Caco-2 (cell line): ENCODE measurements at regions of chr11 and their contacts with region 1.

Region 1: DNA sequence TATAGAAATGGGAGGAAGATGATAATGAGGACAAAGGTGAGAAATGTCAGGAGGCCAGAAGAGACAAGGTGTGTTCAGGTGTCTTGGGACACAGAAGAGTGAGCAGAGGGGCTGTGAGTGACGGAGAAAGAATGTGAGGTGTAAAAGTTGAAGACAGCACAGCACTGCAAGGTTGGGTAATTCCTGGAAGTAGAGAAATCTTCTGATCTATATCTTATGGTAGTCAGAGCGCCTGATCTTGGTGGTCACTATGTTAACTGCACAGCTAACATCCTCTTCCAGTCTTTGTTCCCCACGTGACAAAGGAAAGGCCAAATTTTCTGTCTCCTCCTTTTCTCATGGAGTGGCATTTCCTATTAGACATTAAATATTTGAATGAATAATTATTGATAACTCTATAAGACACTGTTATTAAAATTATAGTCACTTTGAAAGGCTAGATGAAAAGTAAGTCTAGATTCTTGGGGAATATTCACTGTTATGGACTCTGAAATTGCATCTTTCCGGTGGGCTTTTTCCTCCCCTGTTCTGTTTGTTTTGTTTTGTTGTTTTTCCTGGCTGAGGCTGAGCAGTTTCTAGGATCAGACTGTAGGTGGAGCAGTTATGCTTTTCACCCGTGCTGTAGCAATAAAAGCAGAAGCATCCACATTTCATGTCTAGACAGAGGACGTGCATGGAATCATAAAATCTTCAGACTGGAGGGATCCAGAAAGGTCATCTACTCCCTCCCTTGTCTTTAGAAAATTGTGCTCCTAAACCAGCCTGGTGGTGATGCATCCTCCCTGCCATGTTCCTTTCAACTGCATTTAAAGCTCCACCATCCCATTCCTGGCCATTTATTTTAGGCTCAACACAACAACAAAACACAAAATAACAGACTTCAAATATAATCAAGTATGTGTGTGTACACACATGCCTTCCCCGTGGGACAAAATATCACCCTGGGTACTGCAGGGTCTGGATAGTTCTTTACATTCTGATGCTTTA is 26.6 kb downstream of the SC5D start:
- DNase-seq: peak in 1 of 2 experiments; percentile 61
- H3K4me3 ChIP-seq: no peak overlapping the region
- H3K4me3 Mint-ChIP-seq: no peak overlapping the region
- H3K27ac Mint-ChIP-seq: no peak overlapping the region
- H3K4me1 ChIP-seq: peaks cover 4% of the 10 kb centered on the region; the same call in 1 of the 2 replicates
- H3K4me1 Mint-ChIP-seq: peaks cover 18% of the 10 kb centered on the region
- H3K27me3 ChIP-seq: no peaks in the 10 kb centered on the region
- H3K27me3 Mint-ChIP-seq: peaks cover 12% of the 10 kb centered on the region
- CTCF ChIP-seq: peak; percentile 88 to 95

Region 2: DNA sequence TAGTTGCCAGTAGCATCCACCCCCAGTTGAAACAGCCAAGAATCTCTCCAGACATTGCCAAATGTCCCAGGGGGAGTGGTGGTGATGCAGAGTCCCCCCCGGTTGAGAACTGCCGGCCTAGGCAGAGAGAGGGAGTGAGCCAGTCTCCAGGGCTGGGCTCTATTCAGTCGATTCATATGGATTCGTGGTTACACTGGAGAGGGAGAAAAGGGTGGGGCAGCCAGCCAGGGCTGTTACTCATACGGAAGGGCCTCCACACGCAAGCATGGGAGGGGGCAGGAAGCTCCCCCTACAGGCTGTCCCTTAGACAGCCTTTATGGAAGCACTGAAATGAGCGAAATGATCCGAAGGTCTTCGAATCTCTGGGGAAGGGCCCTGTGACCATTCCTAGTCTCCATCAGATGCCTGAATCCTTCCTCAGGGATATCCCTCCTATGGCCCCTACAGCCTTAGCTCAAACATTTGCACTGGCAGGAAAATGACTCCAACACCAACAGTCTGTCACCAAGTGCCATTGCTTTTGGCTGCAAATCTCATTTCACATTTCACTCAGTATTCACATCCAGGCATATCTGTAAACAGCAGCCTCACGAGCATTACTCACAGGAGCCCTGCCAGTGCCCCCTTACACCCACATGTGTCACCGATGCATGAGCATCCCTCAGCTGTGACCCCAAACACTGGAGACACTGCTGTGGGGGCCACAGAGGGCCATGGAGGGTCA is 1012.5 kb before region 1 on chr11:
- CTCF ChIA-PET with region 1: no interaction called
- POLR2A ChIA-PET with region 1: no interaction called
- intact Hi-C with region 1: no loop called
- DNase-seq: no peak
- H3K4me3 ChIP-seq: no peak overlapping the region
- H3K4me3 Mint-ChIP-seq: no peak overlapping the region
- H3K27ac Mint-ChIP-seq: no peak overlapping the region
- H3K4me1 ChIP-seq: no peaks in the 10 kb centered on the region
- H3K4me1 Mint-ChIP-seq: peaks cover 8% of the 10 kb centered on the region
- H3K27me3 ChIP-seq: no peaks in the 10 kb centered on the region
- H3K27me3 Mint-ChIP-seq: no peaks in the 10 kb centered on the region
- CTCF ChIP-seq: peak in 1 of 2 experiments; percentile 33

Region 3: GRCh38 chr11:121383716-121384115 is 64.6 kb after region 1 on chr11:
- CTCF ChIA-PET with region 1: no interaction called
- POLR2A ChIA-PET with region 1: no interaction called
- intact Hi-C with region 1: loop called (anchors 1 kb)
- DNase-seq: no peak
- H3K4me3 ChIP-seq: no peak overlapping the region
- H3K4me3 Mint-ChIP-seq: no peak overlapping the region
- H3K27ac Mint-ChIP-seq: no peak overlapping the region
- H3K4me1 ChIP-seq: no peaks in the 10 kb centered on the region
- H3K4me1 Mint-ChIP-seq: no peaks in the 10 kb centered on the region
- H3K27me3 ChIP-seq: no peaks in the 10 kb centered on the region; the same call in 1 of the 2 replicates
- H3K27me3 Mint-ChIP-seq: peaks cover 14% of the 10 kb centered on the region
- CTCF ChIP-seq: no peak

Region 4: GRCh38 chr11:121394785-121395184 is 75.6 kb after region 1 on chr11:
- CTCF ChIA-PET with region 1: no interaction called
- POLR2A ChIA-PET with region 1: no interaction called
- intact Hi-C with region 1: no loop called
- DNase-seq: no peak
- H3K4me3 ChIP-seq: no peak overlapping the region
- H3K4me3 Mint-ChIP-seq: no peak overlapping the region
- H3K27ac Mint-ChIP-seq: no peak overlapping the region
- H3K4me1 ChIP-seq: no peaks in the 10 kb centered on the region
- H3K4me1 Mint-ChIP-seq: no peaks in the 10 kb centered on the region
- H3K27me3 ChIP-seq: peaks cover 2% of the 10 kb centered on the region; the same call in 1 of the 2 replicates
- H3K27me3 Mint-ChIP-seq: peaks cover 21% of the 10 kb centered on the region
- CTCF ChIP-seq: no peak